Activated CD8-positive, alpha-beta T cell treated with anti-CD3 and anti-CD28 coated beads, Interleukin-2, amount 10 ng/mL, durations not matched to agents 7 days and 5 days (primary cell): ENCODE measurements at regions of chr1 and their contacts with region 1.

Region 1: GRCh38 chr1:46303038-46303871 is at the starts of genes LRRC41 and UQCRH:
- DNase-seq: peak; percentile 94
- ATAC-seq: peak; percentile 84
- H3K4me3 Mint-ChIP-seq: peak within 1 kb of the TSS; percentile 94
- H3K27ac Mint-ChIP-seq: peak within 1 kb of the TSS; percentile 99
- H3K4me1 Mint-ChIP-seq: peaks cover 47% of the 10 kb centered on the region
- H3K27me3 Mint-ChIP-seq: no peaks in the 10 kb centered on the region
- total RNA-seq, gene LRRC41: 32.6 to 33.9 TPM
- total RNA-seq, gene UQCRH: 333 to 343 TPM

Region 2: GRCh38 chr1:46132529-46133180 is 170.6 kb before region 1 on chr1 and contains the start of gene PIK3R3:
- CTCF ChIA-PET with region 1: no interaction called
- POLR2A ChIA-PET with region 1: no interaction called
- DNase-seq: peak; percentile 95
- ATAC-seq: peak; percentile 97
- H3K4me3 Mint-ChIP-seq: peak within 1 kb of the TSS; percentile 93
- H3K27ac Mint-ChIP-seq: peak within 1 kb of the TSS; percentile 98
- H3K4me1 Mint-ChIP-seq: peaks cover 30% of the 10 kb centered on the region
- H3K27me3 Mint-ChIP-seq: peaks cover 57% of the 10 kb centered on the region
- total RNA-seq, gene PIK3R3: 4.8 to 5.4 TPM

Region 3: GRCh38 chr1:46285730-46286477 is 17.4 kb before region 1 on chr1:
- CTCF ChIA-PET with region 1: interaction called, 3 read pairs
- POLR2A ChIA-PET with region 1: interaction called, 19 read pairs
- DNase-seq: peak; percentile 66
- ATAC-seq: peak; percentile 82
- H3K4me3 Mint-ChIP-seq: no peak overlapping the region
- H3K27ac Mint-ChIP-seq: peak overlapping the region; percentile 79
- H3K4me1 Mint-ChIP-seq: peaks cover 32% of the 10 kb centered on the region
- H3K27me3 Mint-ChIP-seq: no peaks in the 10 kb centered on the region

Region 4: GRCh38 chr1:46340404-46341221 is 37.4 kb after region 1 on chr1 and contains the start of gene NSUN4:
- CTCF ChIA-PET with region 1: interaction called, 23 read pairs
- POLR2A ChIA-PET with region 1: interaction called, 30 read pairs
- DNase-seq: peak; percentile 89
- ATAC-seq: peak; percentile 92
- H3K4me3 Mint-ChIP-seq: peak within 1 kb of the TSS; percentile 100
- H3K27ac Mint-ChIP-seq: peak within 1 kb of the TSS; percentile 100
- H3K4me1 Mint-ChIP-seq: peaks cover 34% of the 10 kb centered on the region
- H3K27me3 Mint-ChIP-seq: no peaks in the 10 kb centered on the region
- total RNA-seq, gene NSUN4: 22.3 to 22.5 TPM

Region 5: DNA sequence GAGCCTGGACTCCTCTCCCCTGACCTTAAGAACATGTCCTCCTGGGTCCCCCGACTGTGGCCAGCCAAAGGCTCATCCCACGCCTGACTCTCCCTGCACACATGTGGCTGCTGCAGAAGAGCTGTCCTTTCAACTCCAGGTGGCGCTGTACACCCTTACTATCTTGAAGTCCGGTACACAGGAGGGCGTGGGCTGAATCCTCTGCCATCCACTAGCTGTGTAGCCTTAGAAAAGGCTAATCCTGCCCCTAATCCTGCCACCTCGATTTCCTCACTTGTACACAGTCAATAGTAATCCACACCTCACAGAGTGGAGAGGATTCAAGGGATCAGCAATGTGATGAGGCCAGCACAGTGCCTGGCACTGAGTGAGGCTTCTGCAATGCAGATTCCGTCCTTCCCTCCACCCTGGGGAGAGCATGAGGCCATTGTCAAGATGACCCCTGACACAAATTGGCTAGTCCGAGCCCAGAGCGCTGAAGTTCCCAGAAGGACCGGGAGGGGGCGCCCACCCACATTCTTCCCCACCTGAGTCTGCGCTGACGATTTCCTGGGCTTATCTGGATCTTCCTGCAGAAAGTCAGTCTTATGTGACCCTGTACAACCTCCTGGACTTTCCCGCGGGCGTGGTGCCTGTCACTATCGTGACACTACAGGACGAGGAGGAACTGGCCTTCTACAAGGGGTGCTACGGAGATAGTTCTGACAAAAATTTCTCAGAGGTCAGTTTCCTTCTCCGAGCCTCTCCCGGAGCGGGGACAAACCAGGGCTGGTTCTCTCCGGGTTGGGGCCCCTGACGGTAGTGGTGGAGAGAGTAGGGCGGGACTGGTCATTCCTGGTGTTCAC is 139.3 kb after region 1 on chr1:
- CTCF ChIA-PET with region 1: no interaction called
- POLR2A ChIA-PET with region 1: no interaction called
- DNase-seq: peak; percentile 77
- ATAC-seq: peak; percentile 79
- H3K4me3 Mint-ChIP-seq: peak overlapping the region; percentile 77
- H3K27ac Mint-ChIP-seq: peak overlapping the region; percentile 17
- H3K4me1 Mint-ChIP-seq: peaks cover 10% of the 10 kb centered on the region
- H3K27me3 Mint-ChIP-seq: peaks cover 26% of the 10 kb centered on the region

Region 6: DNA sequence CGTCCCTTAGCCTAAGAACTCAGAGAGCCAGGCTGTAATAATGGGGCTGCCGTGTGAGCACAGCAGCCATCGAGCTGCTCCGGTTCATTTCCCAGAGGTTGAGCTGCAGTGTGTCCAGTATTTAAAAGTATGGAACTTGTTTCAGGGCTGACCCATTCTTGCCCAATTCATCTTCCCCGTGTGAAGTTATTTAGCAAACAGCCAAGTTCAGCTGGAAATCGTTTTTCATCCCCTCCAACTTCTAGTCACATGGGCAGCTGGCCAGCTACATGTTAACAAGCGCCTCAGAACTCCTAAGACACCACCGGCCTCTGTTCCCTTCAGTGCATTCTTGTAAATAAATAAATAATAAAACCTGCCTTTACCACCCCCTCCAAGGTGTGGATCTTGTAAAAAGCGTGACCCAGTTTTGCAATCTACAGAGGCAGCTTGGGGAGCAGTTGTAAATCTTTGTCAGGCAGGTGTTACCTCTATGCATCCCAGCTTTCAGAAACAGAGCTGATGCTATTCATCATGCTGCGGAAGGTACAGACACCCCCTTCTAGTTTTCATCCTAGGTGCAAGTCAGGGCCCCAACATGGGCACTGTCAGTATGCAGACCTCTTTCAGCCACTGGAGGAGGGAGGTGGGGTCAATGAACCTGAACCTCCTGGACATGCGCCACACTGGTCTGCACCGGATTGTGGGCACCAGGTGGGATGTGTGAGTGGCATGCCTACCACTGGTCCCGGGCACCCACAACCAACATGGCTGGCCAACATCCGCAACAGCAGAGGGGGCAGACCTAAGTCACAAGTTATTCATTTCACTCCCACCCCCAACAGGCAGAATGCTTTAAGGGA is 266.9 kb after region 1 on chr1:
- CTCF ChIA-PET with region 1: no interaction called
- POLR2A ChIA-PET with region 1: no interaction called
- DNase-seq: no peak
- ATAC-seq: no peak
- H3K4me3 Mint-ChIP-seq: no peak overlapping the region
- H3K27ac Mint-ChIP-seq: no peak overlapping the region
- H3K4me1 Mint-ChIP-seq: peaks cover 14% of the 10 kb centered on the region
- H3K27me3 Mint-ChIP-seq: no peaks in the 10 kb centered on the region